ENCODE measurements at regions of chr1 and their contacts with region 1.

Region 1: DNA sequence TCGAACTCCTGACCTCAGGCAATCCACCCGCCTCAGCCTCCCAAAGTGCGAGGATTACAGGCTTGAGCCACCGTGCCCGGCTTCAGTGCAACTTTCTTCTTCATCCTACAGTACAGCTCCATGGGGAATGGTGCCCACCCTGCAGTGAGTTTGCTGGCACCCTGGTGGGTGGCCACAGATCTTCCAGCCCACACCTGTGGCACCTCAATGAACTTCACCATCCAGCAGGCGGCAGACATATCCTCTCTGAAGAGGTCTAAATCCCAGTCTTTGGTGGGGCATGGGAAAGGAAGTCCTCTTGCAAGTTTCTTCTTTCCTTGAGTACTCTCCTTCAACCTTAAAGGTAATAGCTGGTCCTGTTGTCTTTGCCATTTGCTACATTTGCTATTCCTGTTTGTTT is 18.1 kb upstream of the ZBTB8A start:
- DNase-seq: no peak
- H3K4me3 Mint-ChIP-seq: peak overlapping the region; percentile 78
- H3K27ac Mint-ChIP-seq: peak overlapping the region; percentile 34
- H3K4me1 Mint-ChIP-seq: peaks cover 7% of the 10 kb centered on the region
- H3K27me3 Mint-ChIP-seq: peaks cover 5% of the 10 kb centered on the region

Region 2: DNA sequence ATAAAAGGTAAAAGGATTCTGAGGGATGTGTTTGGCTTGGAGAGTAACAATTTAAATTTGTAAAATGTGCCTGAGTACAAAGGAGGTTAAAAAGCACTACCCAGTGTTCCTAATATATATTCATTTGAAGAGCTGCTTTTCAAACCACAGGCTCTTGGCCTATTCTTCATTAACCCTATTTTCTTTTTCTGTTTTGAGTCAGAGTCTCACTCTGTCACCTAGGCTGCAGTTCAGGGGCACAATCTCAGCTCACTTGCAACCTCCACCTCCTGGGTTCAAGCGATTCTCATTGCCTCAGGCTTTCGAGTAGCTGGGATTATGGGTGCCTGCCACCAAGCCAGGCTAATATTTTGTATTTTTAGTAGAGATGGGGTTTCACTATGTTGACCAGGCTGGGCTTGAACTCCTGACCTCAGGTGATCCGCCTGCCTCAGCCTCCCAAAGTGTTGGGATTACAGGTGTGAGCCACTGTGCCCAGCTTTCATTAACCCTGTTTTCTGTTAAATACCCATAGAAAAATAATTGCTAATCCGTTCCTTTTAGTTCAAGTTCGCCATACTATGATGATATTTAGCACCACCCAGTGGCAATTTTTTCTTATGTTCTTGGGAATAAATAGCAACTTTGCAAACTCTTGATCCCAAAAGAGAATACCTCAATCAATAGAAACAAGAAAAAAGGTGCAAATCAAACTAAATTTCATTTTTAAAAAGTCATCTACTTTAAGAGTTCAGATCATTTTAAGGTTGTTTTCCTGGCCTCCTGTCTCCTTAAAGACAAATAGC is 98.7 kb after region 1 on chr1:
- intact Hi-C with region 1: loop called (anchors 10 kb)
- DNase-seq: no peak
- H3K4me3 Mint-ChIP-seq: no peak overlapping the region
- H3K27ac Mint-ChIP-seq: no peak overlapping the region
- H3K4me1 Mint-ChIP-seq: peaks cover 27% of the 10 kb centered on the region
- H3K27me3 Mint-ChIP-seq: no peaks in the 10 kb centered on the region

Region 3: DNA sequence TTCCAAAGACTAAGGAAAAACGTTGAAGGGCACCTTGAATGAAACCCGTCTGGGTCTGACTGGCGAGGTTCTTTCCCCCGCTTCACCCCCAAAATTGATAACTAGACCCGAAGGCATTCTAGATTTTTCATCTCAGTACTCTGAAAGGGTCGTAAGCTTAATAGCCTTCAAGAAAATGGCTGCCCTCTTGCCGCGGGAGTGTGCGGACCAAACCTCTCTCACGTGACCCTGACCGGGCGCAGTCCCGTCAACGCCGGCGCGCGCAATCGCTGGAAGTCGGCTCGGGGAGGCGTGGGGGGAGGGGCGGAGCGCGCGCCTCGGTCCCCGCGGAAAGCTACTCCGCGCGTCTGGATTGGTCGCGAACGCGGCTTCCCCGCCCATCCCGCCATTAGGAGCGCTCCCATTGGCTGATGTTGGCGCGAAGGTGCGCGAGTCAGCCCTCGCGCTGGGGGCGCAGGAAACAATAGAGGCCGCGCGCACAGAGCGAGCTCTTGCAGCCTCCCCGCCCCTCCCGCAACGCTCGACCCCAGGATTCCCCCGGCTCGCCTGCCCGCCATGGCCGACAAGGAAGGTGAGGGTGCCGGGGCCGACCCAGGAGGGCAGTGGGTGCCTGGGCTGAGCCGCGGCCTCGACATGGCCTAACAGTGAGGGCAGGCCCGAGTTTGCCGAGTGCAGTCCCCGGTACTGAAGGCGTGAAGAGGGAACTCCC is 129.7 kb after region 1 on chr1 and contains the start of gene RBBP4:
- intact Hi-C with region 1: loop called (anchors 1 kb)
- DNase-seq: peak; percentile 100
- H3K4me3 Mint-ChIP-seq: peak within 1 kb of the TSS; percentile 99
- H3K27ac Mint-ChIP-seq: peak within 1 kb of the TSS; percentile 100
- H3K4me1 Mint-ChIP-seq: peaks cover 37% of the 10 kb centered on the region
- H3K27me3 Mint-ChIP-seq: no peaks in the 10 kb centered on the region
- total RNA-seq, gene RBBP4: 329 and 331 TPM in 2 replicates

Region 4: DNA sequence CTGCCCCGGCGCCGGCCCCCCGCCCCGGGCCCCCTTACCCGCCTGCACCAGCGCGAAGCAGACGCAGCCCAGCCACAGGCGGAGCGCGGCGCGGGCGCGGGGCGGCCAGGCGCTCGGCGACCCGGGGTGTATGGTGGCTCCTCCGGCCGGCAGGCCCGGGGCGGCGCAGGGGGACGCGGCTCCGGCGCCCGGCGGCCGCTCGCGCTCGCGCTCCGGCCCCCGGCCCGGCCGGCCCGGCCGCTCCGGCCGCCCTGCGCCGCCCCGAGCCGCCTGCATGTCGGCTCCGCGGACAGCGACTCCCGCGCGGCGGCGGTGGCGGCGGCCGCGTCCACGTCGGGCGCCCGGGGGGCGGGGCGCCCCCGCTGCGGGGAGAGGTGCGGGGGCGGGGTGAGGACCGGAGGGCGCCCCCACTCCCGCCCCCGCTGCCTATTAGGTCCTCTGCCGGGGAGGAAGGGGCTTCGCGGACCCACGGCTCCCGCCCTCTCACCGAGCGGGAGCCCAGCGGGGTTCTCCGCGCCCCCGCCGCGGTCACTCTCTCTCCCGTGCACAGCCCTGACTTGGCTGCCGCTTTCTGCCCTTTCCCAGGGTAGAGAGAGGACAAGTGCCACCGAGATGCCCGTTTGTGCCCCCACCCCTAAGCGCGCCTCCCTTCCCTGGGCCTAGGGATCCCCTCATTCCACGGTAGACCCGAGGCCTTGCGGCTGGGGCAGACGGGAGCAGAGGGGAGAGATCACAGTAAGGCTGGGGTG is 349.6 kb after region 1 on chr1 and contains the start of gene FNDC5:
- intact Hi-C with region 1: loop called (anchors 1 kb)
- DNase-seq: peak; percentile 58
- H3K4me3 Mint-ChIP-seq: peak within 1 kb of the TSS; percentile 68
- H3K27ac Mint-ChIP-seq: no peak within 1 kb of the TSS
- H3K4me1 Mint-ChIP-seq: peaks cover 3% of the 10 kb centered on the region
- H3K27me3 Mint-ChIP-seq: peaks cover 47% of the 10 kb centered on the region
- total RNA-seq, gene FNDC5: not detected in 2 replicates

Measured in activated CD4-positive, alpha-beta T cell treated with anti-CD3 and anti-CD28 coated beads, Interleukin-2, amount 10 ng/mL, durations not matched to agents 24 days and 14 days (primary cell).